Activated T-helper 1 cell treated with anti-CD3 and anti-CD28 coated beads, Interleukin-12 subunit alpha, Interleukin-12 subunit beta, Interleukin-2, Interleukin-4 antibody, amounts not matched to agents 30 ng/mL and 10 ng/mL and 1 ng/mL, durations not matched to agents 14 hours and 24 hours and 36 hours (primary cell): ENCODE measurements at regions of chr2 and their contacts with region 1.

Region 1: DNA sequence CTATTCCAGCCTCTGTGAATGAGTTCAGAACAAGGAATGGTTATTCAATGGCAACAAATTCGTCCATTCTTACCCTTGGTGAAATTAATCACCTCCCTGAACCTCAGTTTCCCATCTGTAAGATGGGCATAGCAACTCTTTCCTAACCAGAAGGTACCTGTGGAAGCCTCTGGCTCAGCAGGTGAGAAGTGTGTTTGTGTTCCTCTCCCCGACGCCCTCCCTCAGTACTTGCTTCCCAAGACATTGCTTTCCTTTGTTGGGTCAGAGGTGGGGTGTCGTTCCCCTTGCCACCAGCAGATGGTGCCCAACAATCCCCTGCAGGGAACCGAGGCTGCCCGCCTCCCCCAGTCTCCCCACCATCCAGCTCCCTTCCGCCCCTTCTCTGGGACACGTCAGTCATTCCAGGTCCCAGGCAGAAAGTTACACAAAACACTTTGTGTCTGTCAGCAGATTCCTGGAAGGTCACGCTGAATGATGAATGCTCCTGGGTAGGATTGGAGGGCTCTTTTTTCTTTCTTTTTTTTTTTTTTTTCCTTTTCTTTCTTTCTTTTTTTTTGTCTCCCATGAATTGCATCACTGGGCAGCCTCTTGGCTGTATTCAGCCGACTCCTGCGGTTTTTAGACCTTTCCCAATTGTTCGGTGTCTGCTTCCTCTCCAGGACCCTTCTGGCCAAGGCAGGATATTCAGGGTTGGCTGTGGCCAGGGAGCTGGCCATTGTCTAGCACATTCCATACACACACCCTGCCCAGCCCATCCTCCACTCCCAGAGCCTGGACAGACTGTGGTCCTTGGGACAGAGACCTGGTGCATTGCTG is 117.3 kb downstream of the LPIN1 start:
- DNase-seq: peak; percentile 22
- H3K4me3 Mint-ChIP-seq: no peak overlapping the region
- H3K27ac Mint-ChIP-seq: no peak overlapping the region
- H3K4me1 Mint-ChIP-seq: peaks cover 9% of the 10 kb centered on the region
- H3K27me3 Mint-ChIP-seq: peaks cover 19% of the 10 kb centered on the region

Region 2: GRCh38 chr2:11904029-11904428 is 40.3 kb after region 1 on chr2:
- intact Hi-C with region 1: no loop called
- DNase-seq: no peak
- H3K4me3 Mint-ChIP-seq: no peak overlapping the region
- H3K27ac Mint-ChIP-seq: no peak overlapping the region
- H3K4me1 Mint-ChIP-seq: no peaks in the 10 kb centered on the region
- H3K27me3 Mint-ChIP-seq: no peaks in the 10 kb centered on the region

Region 3: GRCh38 chr2:11980809-11981208 is 117.1 kb after region 1 on chr2:
- intact Hi-C with region 1: no loop called
- DNase-seq: no peak
- H3K4me3 Mint-ChIP-seq: no peak overlapping the region
- H3K27ac Mint-ChIP-seq: no peak overlapping the region
- H3K4me1 Mint-ChIP-seq: no peaks in the 10 kb centered on the region
- H3K27me3 Mint-ChIP-seq: peaks cover 11% of the 10 kb centered on the region

Region 4: DNA sequence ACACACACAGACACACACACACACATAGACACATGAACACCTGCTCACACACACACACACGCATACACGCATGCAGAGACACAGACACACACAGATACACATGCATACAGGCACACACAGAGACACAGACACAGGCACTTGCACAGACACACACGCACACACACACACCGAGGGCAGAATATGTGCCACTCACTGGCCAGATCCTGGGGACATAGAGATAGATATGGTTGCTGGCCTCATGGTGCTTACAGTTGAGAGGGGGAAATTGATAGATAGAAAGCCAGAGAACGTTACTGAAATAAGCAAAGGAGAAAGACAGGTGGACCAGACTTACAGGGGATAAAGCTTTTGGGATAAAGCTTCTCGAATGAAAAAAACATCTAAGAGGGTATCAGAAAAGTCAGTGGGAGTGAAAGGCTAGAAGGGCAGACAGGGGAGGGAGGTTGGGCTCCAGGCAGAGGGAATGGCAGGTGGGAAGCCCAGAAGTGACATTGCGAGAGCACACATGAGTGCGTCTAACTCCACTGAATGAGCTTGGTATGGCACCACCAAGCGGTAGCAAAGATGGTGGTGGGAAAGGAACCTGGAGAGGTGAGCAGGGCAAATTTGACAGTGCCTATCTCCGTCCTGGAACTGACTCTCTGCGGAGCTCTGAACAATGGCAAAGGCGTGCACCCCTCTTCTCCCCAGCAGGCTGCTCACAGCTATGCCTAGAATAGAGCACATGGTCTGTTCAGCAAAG is 462.9 kb after region 1 on chr2:
- intact Hi-C with region 1: loop called (anchors 5 kb)
- DNase-seq: no peak
- H3K4me3 Mint-ChIP-seq: no peak overlapping the region
- H3K27ac Mint-ChIP-seq: no peak overlapping the region
- H3K4me1 Mint-ChIP-seq: no peaks in the 10 kb centered on the region
- H3K27me3 Mint-ChIP-seq: peaks cover 23% of the 10 kb centered on the region